ENCODE measurements at regions of chr4 and their contacts with region 1.

Region 1: DNA sequence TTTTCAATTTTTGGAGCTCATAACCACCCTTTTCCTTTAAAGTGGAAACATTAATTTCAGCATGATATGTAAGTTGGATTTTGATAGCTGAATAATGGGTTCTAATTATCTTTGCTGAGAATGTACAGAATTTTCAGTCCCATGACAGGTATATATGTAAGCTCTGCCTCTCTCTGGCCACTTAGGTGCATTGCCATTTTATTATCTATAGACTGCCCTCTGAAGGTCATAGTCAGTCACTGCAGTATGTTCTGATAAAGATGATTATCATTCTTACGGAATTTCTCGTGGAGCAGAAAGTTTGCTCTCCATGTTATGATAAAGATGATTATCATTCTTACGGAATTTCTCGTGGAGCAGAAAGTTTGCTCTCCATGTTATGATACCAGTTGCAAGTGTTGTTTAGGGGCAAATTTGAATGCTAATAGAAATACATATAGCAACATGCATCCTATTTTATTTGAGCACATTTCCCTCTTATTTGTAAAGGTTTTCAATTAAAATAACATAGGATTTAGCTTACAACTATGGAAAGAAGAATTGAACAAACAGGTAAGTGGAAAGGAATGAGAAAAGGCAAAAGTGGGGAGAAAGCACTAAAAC is 10.4 kb downstream of the AFP start:
- DNase-seq: peak; percentile 53
- H3K4me3 ChIP-seq: no peak overlapping the region
- H3K27ac ChIP-seq: no peak overlapping the region
- H3K4me1 ChIP-seq: peaks cover 10% of the 10 kb centered on the region
- H3K27me3 ChIP-seq: no peaks in the 10 kb centered on the region
- CTCF ChIP-seq: peak; percentile 67

Region 2: DNA sequence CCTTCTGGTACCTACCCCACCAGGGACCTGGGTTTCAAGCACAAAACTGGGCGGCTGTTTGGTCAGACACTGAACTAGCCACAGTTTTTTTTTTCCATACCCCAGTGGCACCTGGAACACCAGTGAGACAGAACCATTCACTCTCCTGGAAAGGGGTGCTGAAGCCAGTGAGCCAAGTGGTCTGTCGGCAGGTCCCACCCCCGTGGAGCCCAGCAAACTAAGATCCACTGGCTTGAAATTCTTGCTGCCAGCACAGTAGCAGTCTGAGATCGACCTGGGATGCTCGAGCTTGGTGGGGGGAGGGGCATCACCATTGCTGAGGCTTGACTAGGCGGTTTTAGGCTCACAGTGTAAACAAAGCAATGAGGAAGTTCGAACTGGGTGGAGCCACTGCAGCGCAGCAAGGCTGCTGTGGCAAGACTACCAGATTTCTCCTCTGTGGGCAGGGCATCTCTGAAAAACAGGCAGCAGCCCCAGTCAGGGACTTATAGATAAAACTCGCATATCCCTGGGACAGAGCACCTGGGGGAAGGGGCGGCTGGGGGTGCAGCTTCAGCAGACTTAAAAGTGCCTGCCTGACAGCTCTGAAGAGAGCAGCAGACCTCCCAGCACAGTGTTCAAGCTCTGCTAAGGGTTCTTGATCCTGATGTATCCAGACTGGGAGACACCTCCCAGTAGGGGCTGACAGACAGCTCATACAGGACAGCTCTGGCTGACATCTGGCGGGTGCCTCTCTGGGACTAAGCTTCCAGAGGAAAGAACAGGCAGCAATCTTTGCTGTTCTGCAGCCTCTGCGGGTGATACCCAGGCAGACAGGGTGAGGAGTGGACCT is 599.9 kb before region 1 on chr4:
- CTCF ChIA-PET with region 1: no interaction called
- POLR2A ChIA-PET with region 1: no interaction called
- intact Hi-C with region 1: no loop called
- DNase-seq: no peak
- H3K4me3 ChIP-seq: no peak overlapping the region
- H3K27ac ChIP-seq: no peak overlapping the region
- H3K4me1 ChIP-seq: no peaks in the 10 kb centered on the region
- H3K27me3 ChIP-seq: no peaks in the 10 kb centered on the region
- CTCF ChIP-seq: no peak

Region 3: DNA sequence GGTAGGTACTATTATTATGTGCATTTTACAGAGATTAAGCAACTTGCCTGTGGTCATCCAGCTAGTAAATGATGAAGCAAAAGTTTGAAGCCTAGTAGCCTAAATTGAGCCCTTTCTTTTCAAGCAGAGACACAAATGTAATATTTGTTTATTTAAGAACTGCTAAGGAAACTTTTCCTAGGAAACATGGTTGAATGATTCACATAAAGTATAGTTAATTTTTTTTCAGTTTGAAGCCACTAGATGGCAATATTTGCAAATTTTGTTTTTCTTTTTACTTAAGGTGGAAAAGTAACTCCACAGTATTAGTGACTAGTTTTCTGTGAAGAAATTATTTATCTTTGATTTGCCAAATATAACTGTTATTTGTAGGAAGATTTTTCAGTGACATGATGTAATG is 135.0 kb before region 1 on chr4:
- CTCF ChIA-PET with region 1: no interaction called
- POLR2A ChIA-PET with region 1: no interaction called
- intact Hi-C with region 1: loop called (anchors 10 kb)
- DNase-seq: peak; percentile 11
- H3K4me3 ChIP-seq: no peak overlapping the region
- H3K27ac ChIP-seq: no peak overlapping the region
- H3K4me1 ChIP-seq: no peaks in the 10 kb centered on the region
- H3K27me3 ChIP-seq: no peaks in the 10 kb centered on the region
- CTCF ChIP-seq: peak; percentile 43; the same call in 1 of the 2 replicates

Region 4: GRCh38 chr4:73387552-73387951 is 58.9 kb before region 1 on chr4:
- CTCF ChIA-PET with region 1: no interaction called
- POLR2A ChIA-PET with region 1: no interaction called
- intact Hi-C with region 1: no loop called
- DNase-seq: no peak
- H3K4me3 ChIP-seq: no peak overlapping the region
- H3K27ac ChIP-seq: no peak overlapping the region
- H3K4me1 ChIP-seq: no peaks in the 10 kb centered on the region
- H3K27me3 ChIP-seq: no peaks in the 10 kb centered on the region
- CTCF ChIP-seq: no peak